Activated CD8-positive, alpha-beta T cell treated with anti-CD3 and anti-CD28 coated beads, Interleukin-2, amount 10 ng/mL, durations not matched to agents 7 days and 5 days (primary cell): ENCODE measurements at regions of chr16 and their contacts with region 1.

Region 1: DNA sequence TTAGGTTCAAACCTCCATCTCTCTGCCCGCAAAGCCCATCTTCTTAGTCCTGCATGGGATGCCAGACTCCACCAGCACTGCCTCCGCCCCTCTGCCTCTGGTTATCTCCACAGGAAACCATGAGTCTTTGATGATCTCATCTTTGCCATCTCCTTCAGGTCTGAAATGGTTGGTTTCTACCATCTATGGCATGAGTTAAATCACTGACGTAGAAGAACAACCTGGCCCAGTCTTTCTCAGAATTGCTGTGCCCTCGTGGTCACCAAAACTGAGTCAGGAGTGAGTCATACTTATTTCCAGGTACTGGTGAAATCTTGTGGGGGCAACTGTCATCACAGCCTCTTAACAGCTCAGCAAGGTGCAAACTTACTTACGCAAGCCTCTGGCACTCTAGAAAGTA is 468.7 kb upstream of the C16orf82 start:
- DNase-seq: peak; percentile 92
- ATAC-seq: peak; percentile 92
- H3K4me3 Mint-ChIP-seq: peak overlapping the region; percentile 16
- H3K27ac Mint-ChIP-seq: peak overlapping the region; percentile 90
- H3K4me1 Mint-ChIP-seq: peaks cover 94% of the 10 kb centered on the region
- H3K27me3 Mint-ChIP-seq: no peaks in the 10 kb centered on the region

Region 2: GRCh38 chr16:26569793-26570192 is 28.3 kb before region 1 on chr16:
- CTCF ChIA-PET with region 1: interaction called, 15 read pairs
- POLR2A ChIA-PET with region 1: no interaction called
- DNase-seq: peak; percentile 35
- ATAC-seq: peak; percentile 60
- H3K4me3 Mint-ChIP-seq: no peak overlapping the region
- H3K27ac Mint-ChIP-seq: no peak overlapping the region
- H3K4me1 Mint-ChIP-seq: peaks cover 9% of the 10 kb centered on the region
- H3K27me3 Mint-ChIP-seq: peaks cover 27% of the 10 kb centered on the region